ENCODE measurements at regions of chr17 and their contacts with region 1.

Region 1: GRCh38 chr17:51000835-51001638 is 119.6 kb downstream of the SPAG9 start:
- DNase-seq: no peak
- H3K4me3 ChIP-seq: no peak overlapping the region
- H3K27me3 ChIP-seq: no peaks in the 10 kb centered on the region
- CTCF ChIP-seq: peak; percentile 47

Region 2: GRCh38 chr17:50986989-50987660 is 13.9 kb before region 1 on chr17:
- CTCF ChIA-PET with region 1: interaction called, 10 read pairs
- POLR2A ChIA-PET with region 1: no interaction called
- DNase-seq: no peak
- H3K4me3 ChIP-seq: no peak overlapping the region
- H3K27me3 ChIP-seq: no peaks in the 10 kb centered on the region
- CTCF ChIP-seq: no peak

Region 3: GRCh38 chr17:51046514-51047384 is 45.7 kb after region 1 on chr17:
- CTCF ChIA-PET with region 1: interaction called, 14 read pairs
- POLR2A ChIA-PET with region 1: interaction called, 3 read pairs
- DNase-seq: no peak
- H3K4me3 ChIP-seq: peak overlapping the region; percentile 1; the same call in 1 of the 2 replicates
- H3K27me3 ChIP-seq: no peaks in the 10 kb centered on the region
- CTCF ChIP-seq: no peak

Region 4: GRCh38 chr17:51056813-51057510 is 55.9 kb after region 1 on chr17:
- CTCF ChIA-PET with region 1: interaction called, 40 read pairs
- POLR2A ChIA-PET with region 1: no interaction called
- DNase-seq: peak; percentile 87
- H3K4me3 ChIP-seq: no peak overlapping the region
- H3K27me3 ChIP-seq: no peaks in the 10 kb centered on the region
- CTCF ChIP-seq: peak; percentile 65

Region 5: GRCh38 chr17:51120739-51121617 is 119.9 kb after region 1 on chr17 and contains the start of gene SPAG9:
- CTCF ChIA-PET with region 1: no interaction called
- POLR2A ChIA-PET with region 1: no interaction called
- DNase-seq: peak; percentile 80
- H3K4me3 ChIP-seq: peak within 1 kb of the TSS; percentile 97
- H3K27me3 ChIP-seq: no peaks in the 10 kb centered on the region
- CTCF ChIP-seq: no peak
- polyA plus RNA-seq, gene SPAG9: 18.7 and 28.9 TPM in 2 replicates

Region 6: GRCh38 chr17:51153210-51154072 is 152.4 kb after region 1 on chr17 and contains the start of gene NME1:
- CTCF ChIA-PET with region 1: interaction called, 78 read pairs
- POLR2A ChIA-PET with region 1: no interaction called
- DNase-seq: peak; percentile 97
- H3K4me3 ChIP-seq: peak within 1 kb of the TSS; percentile 80
- H3K27me3 ChIP-seq: no peaks in the 10 kb centered on the region
- CTCF ChIP-seq: peak; percentile 85
- polyA plus RNA-seq, gene NME1: 178 and 261 TPM in 2 replicates

Measured in BJ (cell line).